ENCODE measurements at regions of chr19 and their contacts with region 1.

Region 1: DNA sequence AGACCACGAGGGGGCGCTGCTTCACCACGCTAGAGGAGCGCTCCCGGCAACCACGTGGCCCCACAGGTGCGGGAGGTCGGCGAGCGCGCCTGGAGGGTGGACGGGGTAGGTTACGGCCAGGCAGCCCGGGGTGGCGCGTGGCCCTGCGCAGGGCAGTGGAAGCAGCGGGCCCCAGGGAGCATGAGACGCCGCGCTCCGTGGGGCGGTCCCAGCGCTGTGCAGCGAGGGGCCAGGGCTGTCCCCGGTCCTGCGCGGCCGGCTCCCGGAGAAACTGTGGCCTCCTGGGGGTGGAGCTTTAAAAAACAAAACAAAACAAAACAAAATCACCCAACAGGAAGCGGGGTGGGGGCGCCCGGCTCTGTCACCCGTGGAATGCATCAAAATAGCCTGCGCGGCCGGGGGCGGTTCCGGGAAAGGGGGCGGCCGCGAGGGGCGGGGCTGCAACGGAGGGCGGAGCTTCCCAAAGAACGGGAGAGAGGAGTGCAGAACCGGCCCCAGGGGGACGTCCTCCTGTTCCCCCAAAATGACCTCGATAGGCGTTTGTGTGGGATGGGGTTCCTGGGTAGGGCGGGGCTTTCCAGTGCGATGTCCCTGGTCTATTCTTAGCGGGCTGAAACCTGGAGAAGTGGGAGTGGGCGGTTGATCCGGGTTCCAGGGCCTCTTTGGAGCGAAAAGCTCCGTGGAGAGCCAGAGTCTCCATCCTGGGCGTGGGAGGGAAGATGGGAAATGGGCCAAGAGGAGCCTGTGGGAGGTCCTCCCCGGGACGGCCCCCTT is 27.3 kb downstream of the NUMBL start:
- DNase-seq: peak; percentile 85
- H3K4me3 Mint-ChIP-seq: peak overlapping the region; percentile 83
- H3K27ac Mint-ChIP-seq: peak overlapping the region; percentile 80
- H3K4me1 Mint-ChIP-seq: peaks cover 17% of the 10 kb centered on the region
- H3K27me3 Mint-ChIP-seq: no peaks in the 10 kb centered on the region

Region 2: GRCh38 chr19:40241809-40242384 is 421.2 kb before region 1 on chr19:
- intact Hi-C with region 1: no loop called
- DNase-seq: no peak
- H3K4me3 Mint-ChIP-seq: no peak overlapping the region
- H3K27ac Mint-ChIP-seq: no peak overlapping the region
- H3K4me1 Mint-ChIP-seq: no peaks in the 10 kb centered on the region
- H3K27me3 Mint-ChIP-seq: no peaks in the 10 kb centered on the region

Region 3: GRCh38 chr19:40690693-40691420 is 27.7 kb after region 1 on chr19:
- intact Hi-C with region 1: loop called (anchors 2 kb)
- DNase-seq: peak; percentile 80
- H3K4me3 Mint-ChIP-seq: peak overlapping the region; percentile 89
- H3K27ac Mint-ChIP-seq: peak overlapping the region; percentile 95
- H3K4me1 Mint-ChIP-seq: peaks cover 1% of the 10 kb centered on the region
- H3K27me3 Mint-ChIP-seq: no peaks in the 10 kb centered on the region

Region 4: GRCh38 chr19:40822161-40822560 is 159.1 kb after region 1 on chr19:
- intact Hi-C with region 1: loop called (anchors 1 kb)
- DNase-seq: no peak
- H3K4me3 Mint-ChIP-seq: no peak overlapping the region
- H3K27ac Mint-ChIP-seq: no peak overlapping the region
- H3K4me1 Mint-ChIP-seq: peaks cover 23% of the 10 kb centered on the region
- H3K27me3 Mint-ChIP-seq: no peaks in the 10 kb centered on the region

Region 5: DNA sequence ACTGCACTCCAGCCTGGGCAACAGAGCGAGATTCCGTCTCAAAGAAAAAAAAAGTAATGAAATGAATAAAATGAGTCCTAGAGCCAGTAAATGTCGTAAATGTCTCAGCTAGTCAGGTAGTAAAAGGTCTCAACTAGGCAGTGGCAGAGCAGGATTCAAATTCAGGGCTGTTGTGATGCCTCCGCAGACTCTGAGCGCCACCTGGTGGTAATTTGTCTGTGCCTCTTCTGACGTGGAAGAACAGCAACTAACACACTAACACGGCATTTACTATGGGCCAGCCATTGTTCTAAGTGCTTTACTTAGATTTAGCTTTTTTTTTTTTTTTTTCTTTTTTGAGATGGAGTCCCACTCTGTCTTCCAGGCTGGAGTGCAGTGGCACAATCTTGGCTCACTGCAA is 481.3 kb after region 1 on chr19:
- intact Hi-C with region 1: loop called (anchors 5 kb)
- DNase-seq: peak; percentile 75
- H3K4me3 Mint-ChIP-seq: no peak overlapping the region
- H3K27ac Mint-ChIP-seq: no peak overlapping the region
- H3K4me1 Mint-ChIP-seq: no peaks in the 10 kb centered on the region
- H3K27me3 Mint-ChIP-seq: peaks cover 9% of the 10 kb centered on the region